Dorsolateral prefrontal cortex (tissue), 120 donors: ENCODE measurements at regions of chr6 and their contacts with region 1.

Region 1: GRCh38 chr6:127841811-127842210 is 59.0 kb downstream of the THEMIS start:
- DNase-seq: no peak
- H3K4me3 ChIP-seq: no peak overlapping the region
- H3K27ac ChIP-seq: peak overlapping the region in 5 of 59 donors; percentile 12 to 48 (median 32)
- H3K27me3 ChIP-seq: no peaks in the 10 kb centered on the region
- CTCF ChIP-seq: no peak

Region 2: GRCh38 chr6:127775371-127775770 is 66.4 kb before region 1 on chr6:
- intact Hi-C with region 1: loop called in 1 of 2 experiments (anchors 2 kb)
- DNase-seq: no peak
- H3K4me3 ChIP-seq: no peak overlapping the region
- H3K27ac ChIP-seq: no peak overlapping the region
- H3K27me3 ChIP-seq: no peaks in the 10 kb centered on the region
- CTCF ChIP-seq: no peak

Region 3: DNA sequence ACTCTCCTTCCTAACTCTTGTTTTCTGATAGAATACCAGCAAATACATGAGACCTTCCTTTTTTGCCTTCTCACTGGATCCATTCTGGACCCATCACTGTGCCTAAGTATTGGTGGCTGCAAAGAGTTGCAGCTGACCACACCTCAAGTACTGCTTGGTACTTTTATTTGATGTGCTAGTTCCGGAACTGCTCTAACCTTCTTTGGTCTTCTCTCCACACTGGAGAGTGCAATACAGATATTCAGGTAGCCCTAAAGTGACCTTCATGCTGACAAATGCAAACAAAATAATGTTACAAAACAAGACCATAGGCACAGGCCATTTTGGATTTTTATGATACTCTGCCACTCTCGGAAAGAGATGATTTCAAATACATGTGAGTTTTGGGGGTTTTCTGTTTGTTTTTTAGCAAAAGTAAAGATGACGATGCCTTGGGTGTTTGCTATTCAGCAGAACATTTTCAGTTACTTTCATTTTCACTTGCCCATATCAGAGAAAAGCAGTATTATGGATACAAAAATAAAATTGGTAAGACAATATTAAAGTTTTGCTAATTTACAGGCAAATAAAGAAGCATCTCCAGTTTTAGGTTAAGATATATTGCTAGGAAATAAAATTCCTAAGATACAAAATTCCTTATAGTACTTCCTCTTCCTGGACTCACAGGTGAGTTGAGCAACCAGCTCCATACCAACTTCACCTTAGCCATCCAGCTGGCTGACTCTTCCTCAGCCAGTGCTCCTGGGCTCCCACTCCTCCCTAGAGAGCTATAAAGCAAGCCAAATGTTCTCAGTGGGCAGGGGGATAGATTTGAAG is 636.6 kb after region 1 on chr6:
- intact Hi-C with region 1: no loop called
- DNase-seq: no peak
- H3K4me3 ChIP-seq: peak overlapping the region in 49 of 59 donors; percentile 2 to 56 (median 30)
- H3K27ac ChIP-seq: peak overlapping the region in 58 of 59 donors; percentile 0 to 96 (median 86)
- H3K27me3 ChIP-seq: no peaks in the 10 kb centered on the region
- CTCF ChIP-seq: no peak